ENCODE measurements at regions of chr1 and their contacts with region 1.

Region 1: GRCh38 chr1:18581420-18581880 is 49.2 kb upstream of the PAX7 start:
- DNase-seq: peak; percentile 81
- ATAC-seq: peak; percentile 83
- H3K4me3 Mint-ChIP-seq: no peak overlapping the region
- H3K27ac Mint-ChIP-seq: no peak overlapping the region
- H3K4me1 Mint-ChIP-seq: no peaks in the 10 kb centered on the region
- H3K27me3 Mint-ChIP-seq: peaks cover 5% of the 10 kb centered on the region
- CTCF ChIP-seq: peak; percentile 89

Region 2: GRCh38 chr1:17725084-17725719 is 856.2 kb before region 1 on chr1:
- CTCF ChIA-PET with region 1: no interaction called
- POLR2A ChIA-PET with region 1: no interaction called
- DNase-seq: no peak
- ATAC-seq: no peak
- H3K4me3 Mint-ChIP-seq: no peak overlapping the region
- H3K27ac Mint-ChIP-seq: no peak overlapping the region
- H3K4me1 Mint-ChIP-seq: no peaks in the 10 kb centered on the region
- H3K27me3 Mint-ChIP-seq: no peaks in the 10 kb centered on the region; the same call in 1 of the 2 replicates
- CTCF ChIP-seq: no peak

Region 3: DNA sequence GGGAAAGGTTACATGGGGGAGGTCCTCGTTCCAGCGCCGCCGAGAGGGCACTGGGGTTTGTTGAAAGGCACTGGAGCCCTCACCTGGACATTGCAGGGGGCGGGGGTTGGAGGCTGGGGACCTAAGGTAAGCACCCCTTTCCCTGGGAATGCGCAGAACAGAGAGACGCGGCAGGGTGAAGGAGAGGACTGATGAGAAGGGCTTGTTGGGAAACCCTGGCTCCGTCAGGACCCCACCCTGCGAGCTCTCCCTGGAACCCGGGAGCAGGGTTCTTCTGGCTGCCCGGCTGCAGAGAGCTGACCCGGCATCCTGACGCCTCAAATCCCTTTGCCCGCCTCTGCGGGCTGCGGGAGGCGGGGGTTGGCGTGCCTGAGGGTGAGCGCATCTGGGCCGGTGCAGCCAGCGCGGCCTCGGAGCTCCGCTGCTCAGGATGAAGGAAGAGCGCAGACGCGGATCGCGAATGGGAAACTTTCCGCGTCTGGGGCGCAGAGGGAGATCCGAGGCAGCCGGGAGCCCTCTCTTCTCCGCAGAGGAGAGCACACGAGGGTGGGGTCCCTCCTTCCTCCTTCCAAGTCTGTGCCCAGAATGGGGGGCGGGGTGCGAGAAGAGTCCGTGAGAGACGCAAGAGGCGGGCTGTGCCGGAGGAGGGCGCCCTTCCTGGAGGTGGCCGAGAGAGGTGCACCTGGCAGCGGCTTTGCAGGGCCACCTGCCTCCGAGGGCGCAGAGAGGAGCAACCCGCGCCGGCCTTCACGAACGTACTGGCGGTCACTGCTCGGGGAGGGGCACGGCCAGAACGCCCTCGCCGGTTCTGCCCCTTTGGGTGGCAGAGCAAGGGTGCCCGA is 471.5 kb before region 1 on chr1:
- CTCF ChIA-PET with region 1: interaction called, 10 read pairs
- POLR2A ChIA-PET with region 1: no interaction called
- DNase-seq: peak; percentile 94
- ATAC-seq: peak; percentile 59
- H3K4me3 Mint-ChIP-seq: peak overlapping the region; percentile 86
- H3K27ac Mint-ChIP-seq: no peak overlapping the region
- H3K4me1 Mint-ChIP-seq: peaks cover 45% of the 10 kb centered on the region
- H3K27me3 Mint-ChIP-seq: peaks cover 59% of the 10 kb centered on the region
- CTCF ChIP-seq: peak; percentile 47; the same call in 1 of the 2 replicates

Region 4: GRCh38 chr1:18314399-18314798 is 267.1 kb before region 1 on chr1:
- CTCF ChIA-PET with region 1: interaction called, 10 read pairs
- POLR2A ChIA-PET with region 1: no interaction called
- DNase-seq: no peak
- ATAC-seq: peak; percentile 72
- H3K4me3 Mint-ChIP-seq: no peak overlapping the region
- H3K27ac Mint-ChIP-seq: no peak overlapping the region
- H3K4me1 Mint-ChIP-seq: peaks cover 8% of the 10 kb centered on the region
- H3K27me3 Mint-ChIP-seq: peaks cover 3% of the 10 kb centered on the region; the same call in 1 of the 2 replicates
- CTCF ChIP-seq: no peak

Region 5: GRCh38 chr1:18348354-18348753 is 233.1 kb before region 1 on chr1:
- CTCF ChIA-PET with region 1: interaction called, 14 read pairs
- POLR2A ChIA-PET with region 1: no interaction called
- DNase-seq: no peak
- ATAC-seq: peak; percentile 22
- H3K4me3 Mint-ChIP-seq: no peak overlapping the region
- H3K27ac Mint-ChIP-seq: no peak overlapping the region
- H3K4me1 Mint-ChIP-seq: peaks cover 45% of the 10 kb centered on the region
- H3K27me3 Mint-ChIP-seq: no peaks in the 10 kb centered on the region; the same call in 1 of the 2 replicates
- CTCF ChIP-seq: no peak

Region 6: GRCh38 chr1:18549906-18550305 is 31.5 kb before region 1 on chr1:
- CTCF ChIA-PET with region 1: interaction called, 130 read pairs
- POLR2A ChIA-PET with region 1: no interaction called
- DNase-seq: no peak
- ATAC-seq: no peak
- H3K4me3 Mint-ChIP-seq: no peak overlapping the region
- H3K27ac Mint-ChIP-seq: no peak overlapping the region
- H3K4me1 Mint-ChIP-seq: peaks cover 19% of the 10 kb centered on the region
- H3K27me3 Mint-ChIP-seq: peaks cover 32% of the 10 kb centered on the region
- CTCF ChIP-seq: no peak

Region 7: GRCh38 chr1:18569811-18570545 is 11.5 kb before region 1 on chr1:
- CTCF ChIA-PET with region 1: interaction called, 22 read pairs
- POLR2A ChIA-PET with region 1: no interaction called
- DNase-seq: no peak
- ATAC-seq: peak; percentile 41
- H3K4me3 Mint-ChIP-seq: no peak overlapping the region
- H3K27ac Mint-ChIP-seq: no peak overlapping the region
- H3K4me1 Mint-ChIP-seq: peaks cover 17% of the 10 kb centered on the region
- H3K27me3 Mint-ChIP-seq: peaks cover 10% of the 10 kb centered on the region
- CTCF ChIP-seq: no peak

Region 8: DNA sequence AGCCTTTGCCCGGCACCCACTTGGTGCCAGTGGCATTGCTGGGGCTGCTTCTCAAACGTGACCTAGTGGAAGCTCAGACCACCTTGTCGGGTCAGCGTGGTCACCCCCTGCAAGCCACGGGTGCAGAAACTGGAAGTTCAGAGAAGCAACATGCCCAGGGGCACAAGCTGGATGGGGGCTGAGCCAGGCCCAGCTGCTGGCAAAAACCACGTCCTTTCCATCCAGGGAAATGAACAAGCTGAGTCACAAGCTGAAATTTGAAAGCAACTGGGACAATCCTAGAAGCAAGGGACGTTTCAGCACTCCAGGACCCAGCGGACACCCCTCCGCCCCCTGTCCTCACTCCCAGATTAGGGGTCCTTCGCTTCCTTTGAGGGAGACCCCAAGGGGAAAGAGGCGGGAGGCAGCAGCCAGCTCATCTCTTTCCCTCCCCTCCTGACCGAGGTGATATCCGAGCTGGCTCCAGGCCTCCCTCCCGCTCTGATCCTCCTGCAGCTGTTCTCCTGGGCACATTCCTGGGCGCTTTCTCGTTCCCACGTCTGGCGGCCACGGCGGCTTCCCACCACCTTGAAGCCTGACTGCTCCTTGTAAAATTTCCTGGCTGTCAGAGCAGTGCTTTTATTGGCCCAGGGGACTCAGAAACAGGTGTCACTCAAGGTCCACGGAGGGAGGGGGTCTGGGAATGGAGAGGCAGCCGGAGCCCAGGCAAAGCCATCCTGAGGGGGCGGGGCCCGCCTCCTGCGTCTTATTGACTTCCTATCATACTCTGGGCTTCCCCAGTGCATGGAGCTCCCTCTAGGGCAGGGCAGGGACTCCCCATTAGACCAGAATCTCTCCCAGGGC is 112.0 kb after region 1 on chr1:
- CTCF ChIA-PET with region 1: interaction called, 12 read pairs
- POLR2A ChIA-PET with region 1: no interaction called
- DNase-seq: peak; percentile 89
- ATAC-seq: peak; percentile 95
- H3K4me3 Mint-ChIP-seq: peak overlapping the region; percentile 69
- H3K27ac Mint-ChIP-seq: 0 out of 2 replicates have a peak overlapping the region, but pooled peaks have one; percentile 41
- H3K4me1 Mint-ChIP-seq: peaks cover 16% of the 10 kb centered on the region
- H3K27me3 Mint-ChIP-seq: peaks cover 33% of the 10 kb centered on the region
- CTCF ChIP-seq: no peak

Measured in WTC11 (cell line).